Pancreas (tissue), 10 donors: ENCODE measurements at regions of chr1 and their contacts with region 1.

Region 1: DNA sequence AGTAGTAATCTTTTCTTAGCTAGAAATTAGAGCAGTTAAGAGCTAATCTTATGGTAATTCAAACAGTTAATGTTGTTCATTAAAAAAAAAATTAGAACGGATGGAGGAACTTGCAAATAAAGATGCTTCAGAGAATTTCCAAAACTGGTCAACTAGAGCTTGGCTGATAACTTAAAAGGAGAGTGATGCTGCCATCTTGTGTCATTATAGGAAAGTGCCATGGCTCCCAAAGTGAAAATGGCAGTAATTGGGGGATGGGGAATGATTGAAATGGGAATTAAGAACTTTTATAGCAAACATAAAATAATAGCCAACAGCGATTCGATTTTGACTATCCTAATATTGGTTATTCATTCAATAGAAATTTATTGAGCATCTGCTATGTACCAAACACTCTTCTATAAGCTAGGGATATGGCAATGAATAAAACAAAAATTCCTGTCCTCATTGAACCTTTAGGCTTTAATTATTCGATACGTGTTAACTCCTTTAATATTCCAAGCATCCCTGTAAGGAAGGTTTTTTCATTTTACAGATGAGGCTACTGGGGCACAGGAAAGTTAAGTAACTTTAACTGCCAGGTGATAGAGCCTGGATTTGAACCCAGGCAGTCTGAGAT is 5.7 kb upstream of the PLPP3 start:
- DNase-seq: peak in 2 of 6 donors; percentile 15 to 58
- ATAC-seq: peak; percentile 66 to 92 (median 91)
- H3K4me3 ChIP-seq: no peak overlapping the region
- H3K27ac ChIP-seq: no peak overlapping the region
- H3K4me1 ChIP-seq: peaks cover 2 to 16% (median 10%) of the 10 kb centered on the region in 3 donors
- H3K27me3 ChIP-seq: no peaks in the 10 kb centered on the region
- CTCF ChIP-seq: peak; percentile 36 to 71 (median 58)

Region 2: GRCh38 chr1:55284852-55285251 is 1300.2 kb before region 1 on chr1:
- intact Hi-C with region 1: loop called in 1 of 3 experiments (anchors 10 kb)
- DNase-seq: peak in 1 of 6 donors; percentile 18
- ATAC-seq: peak in 3 of 4 donors; percentile 55 to 76 (median 70)
- H3K4me3 ChIP-seq: no peak overlapping the region
- H3K27ac ChIP-seq: no peak overlapping the region
- H3K4me1 ChIP-seq: no peaks in the 10 kb centered on the region
- H3K27me3 ChIP-seq: no peaks in the 10 kb centered on the region
- CTCF ChIP-seq: peak in 1 of 4 donors; percentile 23

Region 3: GRCh38 chr1:55375617-55376258 is 1209.3 kb before region 1 on chr1:
- intact Hi-C with region 1: loop called in 1 of 3 experiments (anchors 5 kb)
- DNase-seq: peak in 3 of 6 donors; percentile 15 to 47 (median 37)
- ATAC-seq: peak in 3 of 4 donors; percentile 61 to 80 (median 79)
- H3K4me3 ChIP-seq: no peak overlapping the region
- H3K27ac ChIP-seq: no peak overlapping the region
- H3K4me1 ChIP-seq: no peaks in the 10 kb centered on the region
- H3K27me3 ChIP-seq: no peaks in the 10 kb centered on the region
- CTCF ChIP-seq: peak; percentile 85 to 91 (median 90)

Region 4: DNA sequence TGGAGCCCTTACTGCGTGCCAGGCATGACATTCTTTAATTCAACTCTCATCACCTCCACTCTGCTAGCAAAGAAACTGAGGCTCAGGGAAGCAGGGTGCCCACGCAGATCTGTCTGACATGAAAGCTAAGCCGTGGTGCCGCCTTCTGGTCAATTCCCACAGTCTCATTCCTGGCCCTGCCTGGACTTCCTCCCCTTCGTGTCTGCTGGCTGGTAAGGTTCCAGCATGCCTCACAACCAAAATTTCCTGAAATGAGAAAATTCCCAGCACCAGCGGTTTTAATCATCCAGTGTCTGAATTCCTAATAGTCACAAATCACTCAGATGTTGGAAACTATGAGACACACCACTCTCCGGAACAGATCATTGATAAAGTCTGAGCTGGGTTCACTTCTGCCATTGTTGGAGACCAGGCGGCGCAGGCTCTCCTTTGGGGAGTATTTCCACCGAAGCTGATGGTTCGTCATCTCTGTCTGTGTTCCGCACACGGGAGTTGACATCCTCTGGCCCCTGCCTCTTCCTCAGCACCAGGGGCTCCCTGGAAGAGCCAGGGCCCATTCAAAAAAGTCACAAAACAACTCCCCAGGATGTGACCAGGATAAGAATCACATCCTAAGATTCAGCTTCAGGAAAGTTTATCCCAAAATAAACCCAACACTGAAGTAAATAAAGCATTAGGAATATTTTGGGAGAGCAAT is 173.4 kb before region 1 on chr1:
- intact Hi-C with region 1: loop called in 1 of 3 experiments (anchors 5 kb)
- DNase-seq: peak in 4 of 6 donors; percentile 51 to 58 (median 55)
- ATAC-seq: peak; percentile 42 to 58 (median 54)
- H3K4me3 ChIP-seq: no peak overlapping the region
- H3K27ac ChIP-seq: peak overlapping the region in 2 of 4 donors; percentile 10 to 26
- H3K4me1 ChIP-seq: peaks cover 12 to 34% (median 13%) of the 10 kb centered on the region in 3 donors
- H3K27me3 ChIP-seq: no peaks in the 10 kb centered on the region
- CTCF ChIP-seq: no peak

Region 5: GRCh38 chr1:56424744-56425508 is 160.1 kb before region 1 on chr1:
- intact Hi-C with region 1: no loop called
- DNase-seq: peak in 5 of 6 donors; percentile 47 to 75 (median 59)
- ATAC-seq: peak; percentile 24 to 75 (median 56)
- H3K4me3 ChIP-seq: no peak overlapping the region
- H3K27ac ChIP-seq: no peak overlapping the region
- H3K4me1 ChIP-seq: no peaks in the 10 kb centered on the region
- H3K27me3 ChIP-seq: no peaks in the 10 kb centered on the region
- CTCF ChIP-seq: no peak

Region 6: DNA sequence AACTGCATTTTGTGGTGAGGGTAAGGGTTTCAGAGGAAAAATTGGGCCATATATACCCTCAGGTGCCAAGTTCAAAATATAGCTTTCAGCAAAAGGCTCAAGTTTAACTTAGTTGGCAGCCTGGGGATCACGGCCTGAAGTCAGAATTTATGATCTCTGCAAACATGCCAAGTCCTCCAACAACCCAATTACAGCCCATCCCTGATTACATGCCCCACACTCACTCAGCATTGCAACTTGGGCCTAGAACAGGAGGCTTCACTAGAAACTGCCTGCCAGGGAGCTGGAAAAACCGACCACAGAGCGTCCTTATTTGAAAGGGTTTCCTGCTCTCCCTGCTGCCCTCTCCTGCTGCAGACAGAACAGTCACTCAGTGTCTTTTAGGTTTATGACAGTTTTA is 221.8 kb after region 1 on chr1:
- intact Hi-C with region 1: no loop called
- DNase-seq: no peak
- ATAC-seq: no peak
- H3K4me3 ChIP-seq: no peak overlapping the region
- H3K27ac ChIP-seq: no peak overlapping the region
- H3K4me1 ChIP-seq: peaks cover 0 to 11% (median 0%) of the 10 kb centered on the region in 3 donors
- H3K27me3 ChIP-seq: no peaks in the 10 kb centered on the region
- CTCF ChIP-seq: no peak